Heart left ventricle (tissue), 16 donors: ENCODE measurements at regions of chr21 and their contacts with region 1.

Region 1: DNA sequence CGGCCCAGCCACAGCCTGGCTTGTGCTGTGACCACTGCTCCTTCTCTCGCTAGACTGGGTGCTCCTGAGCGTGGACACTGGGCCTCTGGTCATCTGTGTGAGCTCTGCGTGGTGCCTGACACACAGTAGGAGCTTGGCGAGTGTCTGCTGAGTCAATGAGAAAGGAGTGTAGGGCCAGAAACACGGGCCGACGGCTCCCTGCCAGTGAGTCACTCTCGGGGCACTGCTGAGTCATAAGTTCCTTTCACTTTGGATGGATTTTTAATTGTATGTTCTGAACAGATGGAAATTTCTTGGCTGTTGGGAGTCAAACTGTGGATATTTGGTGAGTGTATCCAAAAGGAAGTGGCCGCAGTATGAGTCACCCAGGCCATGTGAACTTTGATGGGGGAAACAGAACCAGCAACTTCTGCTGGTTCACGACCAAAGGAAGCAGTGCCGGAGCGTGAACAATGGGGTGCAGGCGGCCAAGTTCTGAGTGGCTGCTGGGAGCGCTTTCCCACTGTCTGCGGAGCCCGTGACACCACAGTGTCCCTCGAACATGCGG is 41.0 kb upstream of the COL18A1 start:
- DNase-seq: peak; percentile 88 to 93 (median 89)
- ATAC-seq: peak; percentile 81 to 91 (median 84)
- H3K4me3 ChIP-seq: peak overlapping the region in 6 of 12 donors; percentile 4 to 33 (median 10)
- H3K27ac ChIP-seq: peak overlapping the region; percentile 87 to 99 (median 94)
- H3K4me1 ChIP-seq: peaks cover 2 to 60% (median 40%) of the 10 kb centered on the region in 12 donors
- H3K27me3 ChIP-seq: no peaks in the 10 kb centered on the region
- CTCF ChIP-seq: no peak
- POLR2A ChIP-seq: peak in 1 of 2 donors; percentile 48

Region 2: GRCh38 chr21:45287438-45288391 is 76.3 kb before region 1 on chr21 and contains the start of gene POFUT2:
- intact Hi-C with region 1: no loop called
- DNase-seq: peak; percentile 97 to 99 (median 97)
- ATAC-seq: peak; percentile 83 to 93 (median 89)
- H3K4me3 ChIP-seq: peak within 1 kb of the TSS; percentile 47 to 91 (median 76)
- H3K27ac ChIP-seq: peak within 1 kb of the TSS; percentile 50 to 90 (median 80)
- H3K4me1 ChIP-seq: peaks cover 0 to 38% (median 25%) of the 10 kb centered on the region in 12 donors
- H3K27me3 ChIP-seq: no peaks in the 10 kb centered on the region
- CTCF ChIP-seq: no peak
- POLR2A ChIP-seq: peak; percentile 37 to 88
- total RNA-seq, gene POFUT2: 10.8 to 22.0 (median 18.5) TPM

Region 3: DNA sequence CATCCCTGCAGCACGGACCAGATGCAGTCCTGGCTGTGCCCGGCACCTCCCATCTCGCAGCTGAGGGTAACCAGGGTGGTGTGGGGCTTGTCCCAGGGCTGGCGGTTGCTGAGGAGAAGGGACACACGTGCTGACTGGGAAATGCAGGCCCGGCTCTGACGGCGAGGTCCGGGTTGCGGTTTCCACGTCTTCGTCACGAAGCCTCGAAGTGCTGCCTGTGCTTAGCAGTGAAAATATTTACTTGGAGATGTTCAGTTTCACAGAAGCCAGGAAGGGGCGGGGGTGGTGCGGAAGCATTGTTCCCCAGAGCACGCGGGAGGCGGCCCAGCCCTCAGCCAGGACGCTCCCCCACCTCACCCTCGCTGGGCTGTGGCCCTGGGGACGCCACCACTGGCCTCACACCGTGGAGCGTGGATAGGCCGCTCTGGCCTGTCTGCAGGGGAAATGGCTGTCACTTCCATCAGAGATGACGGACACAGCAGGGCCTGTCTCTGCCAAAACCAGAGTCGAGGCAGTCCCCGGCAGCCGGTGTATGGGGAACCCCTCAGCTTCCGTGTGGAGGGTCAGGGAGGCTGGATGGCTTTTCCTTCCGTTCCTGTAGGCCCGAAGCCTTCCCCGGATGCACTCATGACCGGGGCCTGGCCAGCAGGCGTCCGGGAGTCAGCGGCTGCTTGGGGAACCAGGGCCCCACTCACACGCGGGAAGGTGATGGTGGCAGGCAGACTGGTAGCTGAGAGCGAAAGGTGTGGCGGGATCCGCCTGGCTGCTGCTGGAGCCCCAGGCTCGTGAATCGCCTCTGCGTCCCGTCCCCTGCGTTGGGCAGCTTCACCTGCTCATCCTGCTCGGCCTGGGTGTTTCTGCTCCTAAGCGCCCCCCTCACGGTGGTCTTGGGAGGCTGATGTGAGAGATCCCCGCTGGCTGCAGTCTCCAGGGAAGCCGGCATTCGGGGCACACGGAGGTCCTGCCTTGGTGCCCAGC is 61.6 kb before region 1 on chr21:
- intact Hi-C with region 1: loop called in 7 of 10 experiments (anchors 1 to 10 kb)
- DNase-seq: peak; percentile 86 to 91 (median 88)
- ATAC-seq: peak; percentile 70 to 88 (median 72)
- H3K4me3 ChIP-seq: no peak overlapping the region
- H3K27ac ChIP-seq: peak overlapping the region; percentile 58 to 98 (median 88)
- H3K4me1 ChIP-seq: peaks cover 15 to 69% (median 45%) of the 10 kb centered on the region in 12 donors
- H3K27me3 ChIP-seq: no peaks in the 10 kb centered on the region
- CTCF ChIP-seq: no peak
- POLR2A ChIP-seq: no peak

Region 4: GRCh38 chr21:45319461-45320211 is 44.4 kb before region 1 on chr21:
- intact Hi-C with region 1: loop called in 3 of 10 experiments (anchors 5 kb)
- DNase-seq: peak; percentile 73 to 90 (median 79)
- ATAC-seq: peak; percentile 68 to 85 (median 80)
- H3K4me3 ChIP-seq: no peak overlapping the region
- H3K27ac ChIP-seq: peak overlapping the region; percentile 74 to 92 (median 86)
- H3K4me1 ChIP-seq: peaks cover 7 to 65% (median 41%) of the 10 kb centered on the region in 12 donors
- H3K27me3 ChIP-seq: no peaks in the 10 kb centered on the region
- CTCF ChIP-seq: peak in 5 of 12 donors; percentile 15 to 39 (median 29)
- POLR2A ChIP-seq: peak in 1 of 2 donors; percentile 36

Region 5: DNA sequence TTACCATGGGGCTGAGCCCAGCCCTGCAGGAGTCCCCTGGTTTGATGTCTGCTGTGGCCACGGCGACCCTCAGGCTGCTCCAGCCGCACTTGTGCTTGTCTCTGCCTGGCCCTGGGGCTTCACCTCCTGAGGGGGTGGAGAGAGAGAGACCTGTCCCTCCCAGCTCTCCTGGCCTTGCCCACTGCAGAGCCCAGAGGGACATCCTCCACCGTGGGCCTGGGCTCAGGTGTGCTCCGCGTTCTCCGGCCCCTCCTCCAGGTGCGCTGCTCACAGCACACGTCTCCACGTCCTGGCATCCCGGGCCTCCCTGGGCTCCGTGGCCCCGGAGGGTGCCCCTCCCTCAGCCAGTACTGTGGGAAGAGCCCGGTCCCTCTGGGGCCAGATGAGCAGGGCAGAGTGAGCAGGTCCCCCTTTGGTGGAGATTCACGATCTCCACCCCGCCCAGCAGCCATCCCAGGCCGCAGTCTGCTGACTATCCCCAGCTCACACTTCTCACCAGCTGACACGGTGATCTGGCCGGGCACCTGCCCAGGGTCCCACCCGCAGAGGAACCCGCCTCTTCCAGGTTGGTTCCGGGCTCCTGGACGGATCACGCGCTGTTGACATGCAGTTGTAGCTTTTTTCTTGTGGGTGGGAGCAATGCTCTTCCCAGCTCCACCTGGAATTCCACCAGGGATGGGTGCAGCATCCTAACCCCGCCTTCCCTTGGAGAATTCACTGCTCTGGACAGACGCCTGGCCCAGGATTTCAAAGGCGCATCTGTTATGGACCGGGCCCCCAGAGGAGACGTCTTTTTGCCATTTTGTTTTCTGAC is 34.5 kb before region 1 on chr21:
- intact Hi-C with region 1: loop called in 2 of 10 experiments (anchors 1 to 5 kb)
- DNase-seq: peak in 3 of 5 donors; percentile 24 to 44 (median 26)
- ATAC-seq: no peak
- H3K4me3 ChIP-seq: no peak overlapping the region
- H3K27ac ChIP-seq: peak overlapping the region in 1 of 12 donors; percentile 57
- H3K4me1 ChIP-seq: peaks cover 0 to 17% (median 2%) of the 10 kb centered on the region in 12 donors
- H3K27me3 ChIP-seq: no peaks in the 10 kb centered on the region
- CTCF ChIP-seq: no peak
- POLR2A ChIP-seq: no peak

Region 6: GRCh38 chr21:45404730-45405270 is 40.8 kb after region 1 on chr21 and contains the start of gene COL18A1:
- intact Hi-C with region 1: loop called in 4 of 10 experiments (anchors 2 to 5 kb)
- DNase-seq: peak; percentile 75 to 87 (median 80)
- ATAC-seq: peak in 3 of 4 donors; percentile 30 to 59 (median 56)
- H3K4me3 ChIP-seq: peak within 1 kb of the TSS; percentile 43 to 97 (median 69)
- H3K27ac ChIP-seq: peak within 1 kb of the TSS; percentile 57 to 89 (median 80)
- H3K4me1 ChIP-seq: peaks cover 0 to 57% (median 41%) of the 10 kb centered on the region in 12 donors
- H3K27me3 ChIP-seq: peaks cover 0 to 24% (median 0%) of the 10 kb centered on the region in 9 donors
- CTCF ChIP-seq: no peak
- POLR2A ChIP-seq: no peak
- total RNA-seq, gene COL18A1: 31.7 to 109 (median 59.0) TPM